ENCODE measurements at regions of chr5 and their contacts with region 1.

Region 1: GRCh38 chr5:41924872-41925554 is at the start of gene FBXO4:
- DNase-seq: peak; percentile 88
- H3K4me3 ChIP-seq: peak within 1 kb of the TSS; percentile 27 to 77 (median 66)
- H3K27ac ChIP-seq: peak within 1 kb of the TSS; percentile 92
- H3K4me1 ChIP-seq: peaks cover 22% of the 10 kb centered on the region
- H3K27me3 ChIP-seq: no peaks in the 10 kb centered on the region
- CTCF ChIP-seq: peak; percentile 50 to 74
- POLR2A ChIP-seq: peak; percentile 86
- total RNA-seq, gene FBXO4: 7.0 and 7.7 TPM in 2 replicates

Region 2: GRCh38 chr5:41445932-41446563 is 479.0 kb before region 1 on chr5:
- CTCF ChIA-PET with region 1: no interaction called
- POLR2A ChIA-PET with region 1: no interaction called
- dilution Hi-C with region 1: no loop called
- intact Hi-C with region 1: no loop called
- DNase-seq: no peak
- H3K4me3 ChIP-seq: no peak overlapping the region
- H3K27ac ChIP-seq: no peak overlapping the region
- H3K4me1 ChIP-seq: no peaks in the 10 kb centered on the region
- H3K27me3 ChIP-seq: no peaks in the 10 kb centered on the region
- CTCF ChIP-seq: no peak
- POLR2A ChIP-seq: no peak

Region 3: DNA sequence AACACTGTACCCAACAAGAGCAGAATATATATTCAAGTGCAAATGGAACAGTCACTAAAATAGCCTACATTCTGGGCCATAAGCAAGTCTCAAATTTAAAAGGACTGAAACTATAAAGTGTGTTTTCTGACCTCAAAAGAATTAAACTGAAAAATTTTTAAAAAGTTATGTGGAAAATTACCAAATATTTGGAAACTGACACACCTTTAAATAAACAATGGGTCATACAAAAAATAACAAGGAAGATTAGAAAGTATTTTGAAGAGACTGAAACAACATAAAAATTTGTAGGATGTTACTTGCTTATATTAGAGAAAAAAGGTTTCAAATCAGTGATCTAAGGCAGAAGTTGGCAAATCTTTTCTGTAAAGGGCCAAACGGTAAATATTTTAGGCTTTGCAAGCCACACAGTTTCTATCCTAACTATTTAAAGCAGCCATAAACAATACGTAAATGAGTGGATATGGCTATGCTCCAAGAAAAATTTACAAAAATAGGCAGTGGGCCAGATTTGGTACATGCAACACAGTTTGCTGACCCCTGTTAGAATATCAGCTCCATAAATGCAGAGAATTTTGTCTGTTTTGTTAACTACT is 136.1 kb before region 1 on chr5:
- CTCF ChIA-PET with region 1: no interaction called
- POLR2A ChIA-PET with region 1: no interaction called
- dilution Hi-C with region 1: no loop called
- intact Hi-C with region 1: loop called (anchors 5 kb)
- DNase-seq: peak; percentile 95
- H3K4me3 ChIP-seq: peak overlapping the region in 1 of 3 experiments; percentile 14
- H3K27ac ChIP-seq: peak overlapping the region; percentile 81
- H3K4me1 ChIP-seq: peaks cover 45% of the 10 kb centered on the region
- H3K27me3 ChIP-seq: no peaks in the 10 kb centered on the region
- CTCF ChIP-seq: no peak
- POLR2A ChIP-seq: no peak

Region 4: GRCh38 chr5:41869739-41870626 is 55.0 kb before region 1 on chr5 and contains the start of gene OXCT1:
- CTCF ChIA-PET with region 1: interaction called, 3 read pairs
- POLR2A ChIA-PET with region 1: no interaction called
- dilution Hi-C with region 1: no loop called
- intact Hi-C with region 1: loop called (anchors 1 kb)
- DNase-seq: peak; percentile 82
- H3K4me3 ChIP-seq: peak within 1 kb of the TSS; percentile 75 to 97 (median 86)
- H3K27ac ChIP-seq: peak within 1 kb of the TSS; percentile 90
- H3K4me1 ChIP-seq: peaks cover 11% of the 10 kb centered on the region
- H3K27me3 ChIP-seq: peaks cover 0 to 1% of the 10 kb centered on the region in 2 experiments
- CTCF ChIP-seq: no peak
- POLR2A ChIP-seq: peak; percentile 60
- total RNA-seq, gene OXCT1: 33.7 and 37.4 TPM in 2 replicates